Activated B cell treated with CpG ODN at 0.5 μM for 24 hours (primary cell): ENCODE measurements at regions of chr6 and their contacts with region 1.

Region 1: GRCh38 chr6:27893059-27893835 is 18.9 kb downstream of the OR2B2 start:
- DNase-seq: peak; percentile 67
- ATAC-seq: peak; percentile 71
- H3K4me3 Mint-ChIP-seq: no peak overlapping the region
- H3K27ac Mint-ChIP-seq: no peak overlapping the region
- H3K4me1 Mint-ChIP-seq: peaks cover 32% of the 10 kb centered on the region
- H3K27me3 Mint-ChIP-seq: no peaks in the 10 kb centered on the region
- CTCF ChIP-seq: no peak

Region 2: DNA sequence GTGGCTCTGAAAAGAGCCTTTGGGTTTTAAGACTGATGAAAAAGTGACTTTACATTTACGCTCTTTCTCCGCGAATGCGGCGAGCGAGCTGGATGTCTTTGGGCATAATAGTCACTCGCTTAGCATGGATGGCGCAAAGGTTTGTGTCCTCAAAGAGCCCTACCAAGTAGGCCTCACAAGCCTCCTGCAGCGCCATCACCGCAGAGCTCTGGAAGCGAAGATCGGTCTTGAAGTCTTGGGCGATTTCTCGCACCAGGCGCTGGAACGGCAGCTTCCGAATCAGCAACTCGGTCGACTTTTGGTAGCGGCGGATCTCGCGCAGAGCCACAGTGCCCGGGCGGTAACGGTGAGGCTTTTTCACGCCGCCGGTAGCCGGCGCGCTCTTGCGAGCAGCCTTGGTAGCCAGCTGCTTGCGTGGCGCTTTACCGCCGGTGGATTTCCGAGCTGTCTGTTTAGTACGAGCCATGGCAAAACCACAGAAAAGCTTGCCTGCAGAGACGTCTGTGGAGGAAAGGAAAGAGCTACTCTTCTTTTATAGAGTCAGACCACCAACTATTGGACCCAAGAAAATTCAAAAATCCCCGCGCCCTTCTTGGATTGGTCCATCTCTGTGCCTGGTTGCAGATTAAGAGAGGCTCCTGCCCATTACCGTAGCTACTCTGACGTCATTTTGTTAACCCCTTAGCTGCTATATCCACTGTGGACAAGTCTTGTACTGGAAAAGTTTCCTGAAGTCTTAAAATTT is 1861.5 kb before region 1 on chr6:
- CTCF ChIA-PET with region 1: no interaction called
- POLR2A ChIA-PET with region 1: interaction called, 19 read pairs
- intact Hi-C with region 1: no loop called
- DNase-seq: peak; percentile 55
- ATAC-seq: peak; percentile 62
- H3K4me3 Mint-ChIP-seq: peak overlapping the region; percentile 93
- H3K27ac Mint-ChIP-seq: peak overlapping the region; percentile 98
- H3K4me1 Mint-ChIP-seq: peaks cover 40% of the 10 kb centered on the region
- H3K27me3 Mint-ChIP-seq: peaks cover 2% of the 10 kb centered on the region
- CTCF ChIP-seq: no peak

Region 3: GRCh38 chr6:26234421-26235296 is 1658.6 kb before region 1 on chr6:
- CTCF ChIA-PET with region 1: no interaction called
- POLR2A ChIA-PET with region 1: interaction called, 12 read pairs
- intact Hi-C with region 1: no loop called
- DNase-seq: peak; percentile 49
- ATAC-seq: peak; percentile 77
- H3K4me3 Mint-ChIP-seq: peak overlapping the region; percentile 89
- H3K27ac Mint-ChIP-seq: peak overlapping the region; percentile 97
- H3K4me1 Mint-ChIP-seq: peaks cover 26% of the 10 kb centered on the region
- H3K27me3 Mint-ChIP-seq: no peaks in the 10 kb centered on the region
- CTCF ChIP-seq: no peak

Region 4: GRCh38 chr6:27138837-27139755 is 754.2 kb before region 1 on chr6:
- CTCF ChIA-PET with region 1: interaction called, 3 read pairs
- POLR2A ChIA-PET with region 1: interaction called, 152 read pairs
- intact Hi-C with region 1: no loop called
- DNase-seq: peak; percentile 59
- ATAC-seq: peak; percentile 82
- H3K4me3 Mint-ChIP-seq: peak overlapping the region; percentile 97
- H3K27ac Mint-ChIP-seq: peak overlapping the region; percentile 98
- H3K4me1 Mint-ChIP-seq: peaks cover 62% of the 10 kb centered on the region
- H3K27me3 Mint-ChIP-seq: no peaks in the 10 kb centered on the region
- CTCF ChIP-seq: no peak

Region 5: DNA sequence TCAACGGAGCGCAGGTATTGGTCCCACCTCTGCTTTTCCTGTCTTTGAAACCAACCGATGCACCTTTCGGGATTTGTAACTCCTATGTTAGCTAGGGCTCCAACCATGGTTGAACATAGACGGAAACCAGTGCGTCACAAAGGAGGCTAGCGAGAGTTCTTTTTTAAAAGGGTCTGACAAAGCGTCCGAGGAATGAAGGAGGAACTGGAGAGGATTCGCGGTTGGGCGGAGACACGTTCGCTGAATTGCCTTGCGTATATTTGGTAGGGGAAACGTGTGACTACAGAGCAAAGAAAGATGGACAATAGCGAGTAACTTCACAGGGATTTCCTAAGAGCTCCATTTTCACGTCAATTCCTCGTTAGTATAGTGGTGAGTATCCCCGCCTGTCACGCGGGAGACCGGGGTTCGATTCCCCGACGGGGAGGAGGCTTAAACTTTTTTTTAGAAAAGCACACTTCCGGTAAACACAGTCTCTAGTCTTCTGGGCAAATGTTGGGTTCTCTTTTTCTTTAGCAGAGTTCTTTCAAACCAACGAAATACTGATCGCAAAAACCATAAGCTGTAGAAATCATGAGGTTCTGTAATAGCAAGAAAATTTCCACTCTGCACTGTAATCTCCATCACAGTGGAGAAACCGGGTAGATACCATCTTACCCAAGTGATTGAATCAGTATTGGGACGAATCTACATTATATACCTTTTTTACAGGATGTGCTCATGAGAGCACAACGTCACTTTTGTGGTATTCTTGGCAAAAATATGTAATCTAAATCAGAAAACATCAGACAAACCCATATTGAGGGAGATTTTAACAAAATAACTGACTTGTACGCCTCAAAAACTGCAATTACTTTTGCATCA is 413.7 kb before region 1 on chr6:
- CTCF ChIA-PET with region 1: interaction called, 6 read pairs
- POLR2A ChIA-PET with region 1: interaction called, 12 read pairs
- intact Hi-C with region 1: loop called (anchors 1 kb)
- DNase-seq: peak; percentile 84
- ATAC-seq: peak; percentile 76
- H3K4me3 Mint-ChIP-seq: no peak overlapping the region
- H3K27ac Mint-ChIP-seq: no peak overlapping the region
- H3K4me1 Mint-ChIP-seq: peaks cover 9% of the 10 kb centered on the region
- H3K27me3 Mint-ChIP-seq: no peaks in the 10 kb centered on the region
- CTCF ChIP-seq: no peak

Region 6: GRCh38 chr6:27667657-27668441 is 225.4 kb before region 1 on chr6:
- CTCF ChIA-PET with region 1: no interaction called
- POLR2A ChIA-PET with region 1: no interaction called
- intact Hi-C with region 1: no loop called
- DNase-seq: no peak
- ATAC-seq: no peak
- H3K4me3 Mint-ChIP-seq: no peak overlapping the region
- H3K27ac Mint-ChIP-seq: peak overlapping the region; percentile 53
- H3K4me1 Mint-ChIP-seq: peaks cover 24% of the 10 kb centered on the region
- H3K27me3 Mint-ChIP-seq: peaks cover 63% of the 10 kb centered on the region
- CTCF ChIP-seq: no peak

Region 7: DNA sequence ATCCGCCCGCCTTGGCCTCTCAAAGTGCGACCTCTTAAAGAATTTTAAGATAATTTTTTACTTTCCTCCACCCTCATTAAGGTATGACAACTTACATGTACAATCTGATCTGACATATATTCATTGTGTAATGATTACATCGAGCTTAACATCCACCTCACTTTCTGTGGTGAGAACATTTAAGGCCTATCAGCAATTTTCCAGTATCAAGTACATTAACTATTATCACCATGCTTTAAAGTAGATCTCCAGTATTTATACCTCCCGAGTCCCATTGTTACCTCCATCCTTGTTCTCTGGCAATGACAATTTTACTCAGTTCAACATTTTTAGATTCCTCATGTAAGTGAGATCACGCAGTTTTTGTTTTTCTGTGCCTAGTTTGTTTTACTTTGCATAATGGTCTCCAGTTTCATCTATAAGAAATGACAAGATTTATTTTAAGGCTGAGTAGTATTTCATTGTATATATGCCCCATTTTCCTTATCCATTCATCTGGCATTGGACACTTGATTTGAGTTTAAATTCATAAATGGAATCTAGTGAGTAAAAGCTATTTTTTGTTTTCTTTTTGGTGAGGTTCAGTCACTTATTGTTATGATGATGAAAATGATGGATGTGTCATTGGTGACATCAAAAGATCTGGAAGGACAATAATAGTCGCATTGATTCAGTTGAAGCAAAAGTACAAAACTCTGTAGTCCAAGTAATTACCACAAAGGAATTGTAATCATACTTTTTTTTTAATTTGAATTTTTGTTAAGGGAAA is 68.0 kb before region 1 on chr6:
- CTCF ChIA-PET with region 1: interaction called, 42 read pairs
- POLR2A ChIA-PET with region 1: interaction called, 177 read pairs
- intact Hi-C with region 1: no loop called
- DNase-seq: no peak
- ATAC-seq: no peak
- H3K4me3 Mint-ChIP-seq: peak overlapping the region; percentile 96
- H3K27ac Mint-ChIP-seq: peak overlapping the region; percentile 99
- H3K4me1 Mint-ChIP-seq: peaks cover 31% of the 10 kb centered on the region
- H3K27me3 Mint-ChIP-seq: no peaks in the 10 kb centered on the region
- CTCF ChIP-seq: no peak

Region 8: DNA sequence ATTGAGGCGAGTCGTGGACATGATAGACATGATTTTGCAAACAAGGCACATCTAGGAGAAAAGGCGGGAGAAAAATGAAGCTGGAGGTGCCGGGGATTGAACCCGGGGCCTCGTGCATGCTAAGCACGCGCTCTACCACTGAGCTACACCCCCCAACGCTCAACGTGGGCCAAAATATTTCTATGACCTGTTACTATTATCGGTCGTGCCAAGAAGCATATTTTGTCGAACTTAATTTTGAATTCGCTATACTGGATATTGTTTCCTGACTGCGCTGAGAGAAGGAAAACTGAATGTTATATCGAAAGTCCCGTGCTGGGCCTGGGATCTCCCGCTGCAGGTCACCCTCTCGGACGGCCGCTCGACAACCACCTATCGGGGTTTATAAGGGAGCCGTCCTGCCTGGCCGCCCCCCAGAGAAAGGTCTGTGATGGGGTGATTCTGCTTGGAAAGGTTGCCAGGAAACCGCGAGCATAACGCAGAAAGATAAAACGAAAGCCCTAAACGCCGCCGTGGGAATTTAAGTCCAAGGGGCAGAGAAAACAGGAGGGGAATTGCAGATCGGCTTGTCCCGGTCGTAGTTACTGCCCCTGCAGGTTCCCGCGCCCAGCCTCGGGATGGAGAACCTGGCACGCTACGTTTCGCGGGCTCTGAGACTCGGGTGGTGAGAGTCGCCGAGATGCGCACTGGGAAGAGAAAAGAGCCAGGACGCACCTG is 970.5 kb after region 1 on chr6:
- CTCF ChIA-PET with region 1: no interaction called
- POLR2A ChIA-PET with region 1: interaction called, 8 read pairs
- intact Hi-C with region 1: loop called (anchors 5 kb)
- DNase-seq: peak; percentile 54
- ATAC-seq: peak; percentile 30
- H3K4me3 Mint-ChIP-seq: peak overlapping the region; percentile 85
- H3K27ac Mint-ChIP-seq: peak overlapping the region; percentile 90
- H3K4me1 Mint-ChIP-seq: peaks cover 27% of the 10 kb centered on the region
- H3K27me3 Mint-ChIP-seq: peaks cover 4% of the 10 kb centered on the region
- CTCF ChIP-seq: no peak